ENCODE measurements at regions of chr2 and their contacts with region 1.

Region 1: GRCh38 chr2:10122386-10123280 is at the start of gene RRM2:
- DNase-seq: peak; percentile 94
- H3K4me3 Mint-ChIP-seq: peak within 1 kb of the TSS; percentile 99
- H3K27ac Mint-ChIP-seq: peak within 1 kb of the TSS; percentile 95
- H3K4me1 Mint-ChIP-seq: peaks cover 45% of the 10 kb centered on the region
- H3K27me3 Mint-ChIP-seq: no peaks in the 10 kb centered on the region
- total RNA-seq, gene RRM2: 374 TPM in 2 replicates

Region 2: GRCh38 chr2:9843229-9844035 is 279.2 kb before region 1 on chr2 and contains the start of gene TAF1B:
- intact Hi-C with region 1: loop called (anchors 2 kb)
- DNase-seq: peak; percentile 91
- H3K4me3 Mint-ChIP-seq: peak within 1 kb of the TSS; percentile 88
- H3K27ac Mint-ChIP-seq: peak within 1 kb of the TSS; percentile 89
- H3K4me1 Mint-ChIP-seq: peaks cover 47% of the 10 kb centered on the region
- H3K27me3 Mint-ChIP-seq: no peaks in the 10 kb centered on the region
- total RNA-seq, gene TAF1B: 29.3 and 32.4 TPM in 2 replicates

Region 3: DNA sequence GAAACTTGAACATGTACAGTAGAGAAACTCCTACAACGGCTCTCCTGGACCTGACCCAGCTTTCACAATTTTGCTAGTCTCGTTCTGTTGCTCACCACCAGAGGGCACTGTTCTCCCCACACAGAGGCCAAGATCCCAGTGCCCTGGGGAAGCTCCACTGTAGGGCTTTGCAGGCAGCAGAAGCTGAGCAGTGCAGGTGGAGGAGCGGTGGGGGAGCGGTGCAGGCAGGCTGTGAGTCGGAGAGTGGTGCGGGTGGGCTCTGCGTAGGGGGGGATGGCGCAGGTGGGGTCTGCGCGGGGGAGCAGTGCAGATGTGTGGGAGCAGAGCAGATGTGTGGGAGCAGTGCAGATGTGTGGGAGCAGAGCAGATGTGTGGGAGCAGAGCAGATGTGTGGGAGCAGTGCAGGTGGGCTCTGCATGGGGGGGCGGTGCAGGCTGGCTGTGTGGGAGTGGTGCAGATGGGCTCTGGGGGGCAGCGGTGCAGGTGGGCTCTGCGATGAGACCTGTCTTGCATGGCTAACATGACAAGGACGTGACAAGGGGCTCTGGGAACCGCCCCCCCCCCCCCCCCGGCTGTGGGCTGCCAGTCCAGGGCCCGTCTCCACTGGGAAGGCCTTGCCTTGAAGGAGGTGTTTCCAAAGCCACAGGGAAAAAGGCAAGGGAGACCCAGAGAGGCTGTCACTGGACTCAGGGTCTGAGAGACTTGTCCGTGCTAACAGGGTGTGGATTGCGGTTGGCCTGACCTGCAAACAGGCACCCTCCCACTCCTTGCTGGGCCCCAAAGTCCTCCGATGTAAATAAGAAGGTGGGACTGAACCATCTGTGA is 49.8 kb before region 1 on chr2:
- intact Hi-C with region 1: loop called (anchors 2 kb)
- DNase-seq: peak; percentile 72
- H3K4me3 Mint-ChIP-seq: no peak overlapping the region
- H3K27ac Mint-ChIP-seq: no peak overlapping the region
- H3K4me1 Mint-ChIP-seq: peaks cover 12% of the 10 kb centered on the region
- H3K27me3 Mint-ChIP-seq: peaks cover 44% of the 10 kb centered on the region

Region 4: GRCh38 chr2:10319853-10320574 is 197.4 kb after region 1 on chr2:
- intact Hi-C with region 1: no loop called
- DNase-seq: no peak
- H3K4me3 Mint-ChIP-seq: no peak overlapping the region
- H3K27ac Mint-ChIP-seq: no peak overlapping the region
- H3K4me1 Mint-ChIP-seq: peaks cover 14% of the 10 kb centered on the region
- H3K27me3 Mint-ChIP-seq: no peaks in the 10 kb centered on the region

Region 5: DNA sequence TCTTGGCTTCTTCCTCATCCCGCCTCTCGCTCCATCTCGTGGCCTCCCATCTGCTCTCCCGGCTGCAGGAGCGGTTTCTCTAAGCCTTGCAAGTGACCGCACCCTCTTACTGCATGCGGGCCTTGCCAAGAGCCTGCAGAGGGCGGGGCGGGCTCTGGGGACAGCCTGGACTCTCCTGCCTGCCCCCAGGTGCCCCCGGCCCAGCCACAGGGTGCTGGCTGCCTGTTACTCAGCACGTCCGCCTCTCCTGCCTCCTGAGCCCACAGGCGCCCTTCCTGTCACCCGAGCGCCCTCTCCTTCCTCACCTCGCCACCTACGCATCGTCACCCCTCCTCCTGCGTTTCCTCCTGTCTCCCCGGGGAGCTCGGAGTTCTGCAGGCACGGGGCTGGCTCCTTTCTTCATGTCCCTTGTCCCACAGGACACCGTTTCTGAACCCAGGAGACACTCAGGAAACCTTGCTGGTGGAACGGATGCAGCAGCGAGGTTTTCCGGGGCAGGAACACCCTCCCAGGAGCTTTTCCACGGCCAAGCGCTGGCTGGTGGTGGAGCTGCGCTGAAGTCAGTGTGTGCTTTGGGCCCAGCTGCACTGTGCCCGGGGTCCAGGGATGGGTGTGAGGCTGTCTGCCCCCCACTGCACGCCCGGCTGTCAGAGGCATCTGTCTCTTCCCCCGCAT is 208.5 kb after region 1 on chr2:
- intact Hi-C with region 1: loop called (anchors 1 kb)
- DNase-seq: peak; percentile 64
- H3K4me3 Mint-ChIP-seq: peak overlapping the region; percentile 95
- H3K27ac Mint-ChIP-seq: peak overlapping the region; percentile 92
- H3K4me1 Mint-ChIP-seq: peaks cover 64% of the 10 kb centered on the region
- H3K27me3 Mint-ChIP-seq: no peaks in the 10 kb centered on the region

Region 6: DNA sequence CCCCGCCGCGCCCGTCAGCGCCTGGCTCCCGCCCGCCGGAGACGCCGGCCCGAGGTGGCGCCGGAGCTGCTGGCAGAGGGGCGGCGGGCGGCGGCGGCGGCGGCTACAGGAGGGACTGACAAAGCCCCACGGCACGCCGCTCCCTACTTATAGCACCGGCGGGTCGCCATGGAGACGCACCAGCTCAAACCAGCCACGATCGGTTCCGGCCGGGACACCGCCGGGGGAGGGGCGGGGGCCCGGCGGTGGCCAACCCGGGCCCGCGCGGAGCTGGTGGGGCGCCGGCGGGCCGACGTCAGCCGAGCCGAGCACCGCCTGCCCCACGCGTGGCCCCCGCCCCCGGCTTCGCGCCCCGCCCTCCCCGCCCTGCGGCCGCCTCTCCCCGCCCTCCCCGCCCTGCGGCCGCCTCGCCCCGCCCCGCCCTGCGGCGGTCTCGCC is 325.6 kb after region 1 on chr2 and contains the start of gene ODC1:
- intact Hi-C with region 1: loop called (anchors 1 kb)
- DNase-seq: peak; percentile 91
- H3K4me3 Mint-ChIP-seq: peak within 1 kb of the TSS; percentile 94
- H3K27ac Mint-ChIP-seq: peak within 1 kb of the TSS; percentile 92
- H3K4me1 Mint-ChIP-seq: peaks cover 36% of the 10 kb centered on the region
- H3K27me3 Mint-ChIP-seq: no peaks in the 10 kb centered on the region
- total RNA-seq, gene ODC1: 161 and 164 TPM in 2 replicates

Measured in activated T-helper 2 cell treated with anti-CD3 and anti-CD28 coated beads, Interferon-gamma antibody, Interleukin-2, Interleukin-4, amounts not matched to agents 10 μg/mL and 5 μg/mL and 100 μg/mL, durations not matched to agents 14 hours and 24 hours and 36 hours (primary cell).